Naive thymus-derived CD8-positive, alpha-beta T cell (primary cell): ENCODE measurements at regions of chr12 and their contacts with region 1.

Region 1: GRCh38 chr12:49842519-49843352 is at the start of gene BCDIN3D:
- DNase-seq: peak; percentile 86 to 95 (median 89)
- ATAC-seq: peak; percentile 93 to 95
- H3K4me3 Mint-ChIP-seq: peak within 1 kb of the TSS; percentile 89 to 97 (median 94)
- H3K27ac Mint-ChIP-seq: peak within 1 kb of the TSS; percentile 91 to 99 (median 96)
- H3K4me1 Mint-ChIP-seq: peaks cover 17 to 53% (median 43%) of the 10 kb centered on the region in 4 donors
- H3K27me3 Mint-ChIP-seq: no peaks in the 10 kb centered on the region
- polyA plus RNA-seq, gene BCDIN3D: 5.9 to 7.1 (median 6.8) TPM

Region 2: DNA sequence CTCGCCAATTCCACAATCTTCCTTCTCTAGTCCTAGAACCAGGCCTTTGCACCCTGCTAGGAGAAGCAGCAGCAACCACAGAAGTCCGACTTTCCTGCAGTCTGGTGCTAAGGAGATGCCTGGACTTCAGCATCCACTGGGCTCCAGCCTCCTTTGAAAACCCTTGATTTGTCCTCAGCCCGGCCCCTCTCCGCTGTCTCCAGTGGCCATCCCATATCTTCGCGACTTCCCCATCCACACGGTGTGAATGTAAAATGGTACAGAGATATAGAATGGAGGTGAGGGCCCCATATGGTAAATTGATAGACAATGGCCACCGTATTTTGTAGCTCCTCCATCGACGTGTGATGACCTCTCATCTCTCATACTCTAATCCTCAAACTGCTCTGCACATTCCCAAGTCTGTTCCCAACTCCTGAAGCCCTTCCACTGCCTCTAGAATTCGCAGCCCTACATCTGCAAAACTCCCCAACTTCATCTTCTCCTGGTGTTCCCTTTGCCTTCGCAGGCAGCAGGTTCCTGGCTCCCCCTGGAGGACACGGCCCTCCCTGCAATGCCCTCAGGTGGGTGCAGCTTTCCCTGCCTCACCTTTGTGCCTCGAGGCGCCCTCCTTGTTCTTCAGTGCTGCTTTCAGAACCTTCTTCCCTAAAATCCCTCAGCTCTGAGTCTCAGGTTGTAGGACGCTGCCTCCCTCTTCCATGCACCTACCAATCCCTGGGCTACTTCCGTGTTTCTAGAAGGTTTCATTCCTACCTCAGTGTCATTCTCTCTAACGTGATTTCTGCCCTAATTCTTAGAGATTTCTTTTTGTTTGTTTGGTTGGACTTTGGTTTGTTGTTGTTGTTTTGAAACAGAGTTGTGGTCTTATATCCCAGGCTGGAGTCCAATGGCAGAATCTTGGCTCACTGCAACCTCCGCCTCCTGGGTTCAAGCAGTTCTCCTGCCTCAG is 64.7 kb before region 1 on chr12:
- POLR2A ChIA-PET with region 1: interaction called, 10 read pairs
- DNase-seq: peak; percentile 55 to 87 (median 70)
- ATAC-seq: peak; percentile 84 to 94
- H3K4me3 Mint-ChIP-seq: peak overlapping the region in 3 of 10 donors; percentile 2 to 51 (median 6)
- H3K27ac Mint-ChIP-seq: peak overlapping the region in 3 of 10 donors; percentile 4 to 83 (median 9)
- H3K4me1 Mint-ChIP-seq: peaks cover 10 to 23% (median 16%) of the 10 kb centered on the region in 4 donors
- H3K27me3 Mint-ChIP-seq: peaks cover 8 to 35% (median 19%) of the 10 kb centered on the region in 5 donors

Region 3: DNA sequence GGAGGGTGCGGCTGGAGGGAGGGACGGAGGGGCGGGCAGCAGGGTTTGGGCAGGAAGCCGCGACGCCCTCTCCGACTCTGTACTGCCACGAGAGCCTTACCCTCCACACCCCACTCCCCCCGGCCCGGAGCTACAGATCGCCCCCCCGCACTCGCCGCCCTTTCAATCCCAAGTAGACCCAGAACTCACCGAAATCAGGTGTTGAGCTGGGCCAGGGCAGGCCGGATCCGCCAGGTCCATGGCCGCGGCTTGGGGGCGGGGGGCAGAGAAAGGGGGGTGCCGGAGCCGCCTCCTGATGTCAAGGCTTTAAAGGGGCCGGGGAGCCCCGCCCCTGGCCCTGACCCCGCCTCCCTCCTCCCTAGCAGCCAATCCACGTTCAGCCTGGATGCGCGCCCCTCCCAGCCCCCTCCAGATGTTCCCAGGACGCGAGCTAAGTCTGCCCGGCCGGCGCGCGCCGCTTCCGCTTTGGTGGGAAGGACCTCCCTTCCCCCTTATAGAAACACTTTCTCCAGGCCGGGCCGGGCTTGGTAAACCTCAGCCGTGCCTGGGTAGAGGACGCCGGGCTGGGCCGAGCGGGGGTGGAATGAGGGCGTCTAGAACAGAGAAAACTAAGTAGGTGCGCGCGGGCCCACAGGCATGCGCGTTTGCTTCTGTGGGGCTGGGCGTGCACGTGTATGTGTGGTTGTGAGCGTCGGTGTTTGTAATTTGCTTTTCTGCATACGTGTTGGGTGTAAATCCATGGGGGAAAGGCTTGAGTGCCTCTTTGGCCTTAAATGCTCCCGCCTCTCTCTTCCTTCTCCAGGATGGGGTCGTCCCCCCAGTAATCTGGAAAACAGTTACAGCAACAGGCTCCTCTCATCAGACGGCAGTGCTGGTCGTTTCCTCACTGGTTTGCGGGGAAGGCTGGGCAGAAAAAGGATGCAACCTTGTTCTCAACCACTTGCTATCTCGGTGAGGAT is 14.3 kb before region 1 on chr12 and contains the start of gene NCKAP5L:
- POLR2A ChIA-PET with region 1: interaction called, 77 read pairs
- DNase-seq: peak; percentile 89 to 97 (median 94)
- ATAC-seq: peak; percentile 92 to 93
- H3K4me3 Mint-ChIP-seq: peak within 1 kb of the TSS; percentile 84 to 100 (median 98)
- H3K27ac Mint-ChIP-seq: peak within 1 kb of the TSS; percentile 80 to 100 (median 98)
- H3K4me1 Mint-ChIP-seq: peaks cover 25 to 47% (median 44%) of the 10 kb centered on the region in 4 donors
- H3K27me3 Mint-ChIP-seq: no peaks in the 10 kb centered on the region
- polyA plus RNA-seq, gene NCKAP5L: 1.9 to 5.1 (median 2.4) TPM